Right cardiac atrium (tissue), 5 donors: ENCODE measurements at regions of chr22 and their contacts with region 1.

Region 1: GRCh38 chr22:37643225-37643847 is 3.9 kb downstream of the SH3BP1 start:
- DNase-seq: peak; percentile 87 to 96 (median 94)
- ATAC-seq: peak; percentile 77 to 80
- H3K4me3 ChIP-seq: no peak overlapping the region
- H3K27ac ChIP-seq: no peak overlapping the region
- H3K4me1 ChIP-seq: no peaks in the 10 kb centered on the region
- H3K27me3 ChIP-seq: no peaks in the 10 kb centered on the region

Region 2: GRCh38 chr22:37229805-37230672 is 413.3 kb before region 1 on chr22:
- intact Hi-C with region 1: no loop called
- DNase-seq: peak in 2 of 3 donors; percentile 74 to 78
- ATAC-seq: peak; percentile 46
- H3K4me3 ChIP-seq: no peak overlapping the region
- H3K27ac ChIP-seq: no peak overlapping the region
- H3K4me1 ChIP-seq: no peaks in the 10 kb centered on the region
- H3K27me3 ChIP-seq: no peaks in the 10 kb centered on the region

Region 3: GRCh38 chr22:37686002-37686982 is 43.0 kb after region 1 on chr22 and contains the start of gene NOL12:
- intact Hi-C with region 1: loop called in 3 of 4 experiments (anchors 5 kb)
- DNase-seq: peak; percentile 84 to 91 (median 90)
- ATAC-seq: peak; percentile 91
- H3K4me3 ChIP-seq: peak within 1 kb of the TSS; percentile 97
- H3K27ac ChIP-seq: peak within 1 kb of the TSS; percentile 98
- H3K4me1 ChIP-seq: peaks cover 2% of the 10 kb centered on the region
- H3K27me3 ChIP-seq: no peaks in the 10 kb centered on the region
- total RNA-seq, gene NOL12: 13.5 to 16.4 (median 14.4) TPM

Region 4: GRCh38 chr22:37752466-37753087 is 109.2 kb after region 1 on chr22:
- intact Hi-C with region 1: no loop called
- DNase-seq: peak; percentile 98 to 99 (median 98)
- ATAC-seq: peak; percentile 88
- H3K4me3 ChIP-seq: no peak overlapping the region
- H3K27ac ChIP-seq: peak overlapping the region; percentile 99
- H3K4me1 ChIP-seq: peaks cover 39% of the 10 kb centered on the region
- H3K27me3 ChIP-seq: no peaks in the 10 kb centered on the region

Region 5: DNA sequence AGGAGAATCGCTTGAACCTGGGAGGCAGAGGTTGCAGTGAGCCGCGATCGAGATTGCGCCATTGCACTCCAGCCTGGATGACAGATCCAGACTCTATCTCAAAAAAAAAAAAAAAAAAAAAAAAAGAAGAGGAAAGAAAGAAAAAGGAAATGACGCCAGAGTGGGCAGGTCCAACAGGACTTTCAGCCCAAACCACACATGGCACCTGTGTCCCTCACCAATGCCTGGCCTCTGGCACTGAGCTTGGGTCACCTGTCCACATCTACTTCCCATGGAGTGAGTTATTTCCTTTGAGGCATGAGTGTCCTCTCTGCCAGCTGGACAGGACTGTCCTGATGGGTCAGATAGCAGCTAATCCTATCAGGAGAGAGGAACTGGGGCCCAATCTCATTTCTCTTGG is 149.2 kb after region 1 on chr22:
- intact Hi-C with region 1: loop called (anchors 5 to 10 kb)
- DNase-seq: peak in 1 of 3 donors; percentile 21
- ATAC-seq: no peak
- H3K4me3 ChIP-seq: no peak overlapping the region
- H3K27ac ChIP-seq: no peak overlapping the region
- H3K4me1 ChIP-seq: no peaks in the 10 kb centered on the region
- H3K27me3 ChIP-seq: no peaks in the 10 kb centered on the region

Region 6: DNA sequence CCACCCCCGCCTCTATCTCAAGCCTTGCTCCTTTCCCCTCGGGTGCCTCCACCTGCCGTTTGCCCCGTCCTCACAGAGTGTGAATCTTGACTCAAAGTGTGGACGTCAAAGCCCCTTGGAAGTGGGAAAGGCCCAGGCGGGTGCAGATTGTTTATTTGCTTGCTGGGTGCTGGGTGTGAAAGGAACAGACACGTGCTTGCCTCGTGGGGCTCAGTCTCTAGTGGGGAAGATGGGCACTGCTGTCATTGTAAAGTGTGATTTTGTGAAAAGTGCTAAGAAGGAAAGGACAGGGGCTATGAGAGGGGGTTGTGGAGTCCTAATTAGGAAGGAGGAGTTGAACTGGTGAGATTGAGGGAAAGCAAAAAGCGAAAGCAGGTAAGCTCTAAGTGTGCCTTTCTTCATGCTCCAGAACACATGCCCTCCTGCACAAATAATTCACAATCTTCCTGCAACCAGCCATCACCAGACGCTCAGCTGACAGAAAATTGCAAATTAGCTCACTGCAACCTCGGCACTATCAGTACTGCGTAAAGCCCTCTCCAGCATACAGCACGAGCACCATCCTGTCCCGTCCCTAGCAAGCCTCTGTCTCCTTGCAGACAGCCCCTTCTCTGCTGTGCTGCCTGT is 154.7 kb after region 1 on chr22:
- intact Hi-C with region 1: loop called (anchors 5 to 10 kb)
- DNase-seq: peak in 1 of 3 donors; percentile 24
- ATAC-seq: no peak
- H3K4me3 ChIP-seq: no peak overlapping the region
- H3K27ac ChIP-seq: no peak overlapping the region
- H3K4me1 ChIP-seq: no peaks in the 10 kb centered on the region
- H3K27me3 ChIP-seq: no peaks in the 10 kb centered on the region